Natural killer cell (primary cell): ENCODE measurements at regions of chr1 and their contacts with region 1.

Region 1: GRCh38 chr1:161165742-161166668 is at the start of gene PPOX:
- DNase-seq: peak; percentile 89 to 97
- ATAC-seq: peak; percentile 88 to 97 (median 91)
- H3K4me3 ChIP-seq: peak within 1 kb of the TSS; percentile 69
- H3K4me3 Mint-ChIP-seq: peak within 1 kb of the TSS; percentile 93
- H3K27ac ChIP-seq: peak within 1 kb of the TSS; percentile 89
- H3K27ac Mint-ChIP-seq: peak within 1 kb of the TSS; percentile 97 to 98
- H3K4me1 ChIP-seq: peaks cover 26% of the 10 kb centered on the region
- H3K4me1 Mint-ChIP-seq: peaks cover 25 to 51% of the 10 kb centered on the region in 2 donors
- H3K27me3 ChIP-seq: no peaks in the 10 kb centered on the region
- H3K27me3 Mint-ChIP-seq: no peaks in the 10 kb centered on the region
- CTCF ChIP-seq: peak; percentile 44
- total RNA-seq, gene PPOX: 45.5 to 66.3 (median 57.4) TPM

Region 2: GRCh38 chr1:161132410-161133219 is 33.4 kb before region 1 on chr1 and contains the start of gene DEDD:
- intact Hi-C with region 1: loop called (anchors 1 kb)
- DNase-seq: peak; percentile 81 to 95
- ATAC-seq: peak; percentile 92 to 97 (median 95)
- H3K4me3 ChIP-seq: peak within 1 kb of the TSS; percentile 77
- H3K4me3 Mint-ChIP-seq: no peak within 1 kb of the TSS
- H3K27ac ChIP-seq: peak within 1 kb of the TSS; percentile 81
- H3K27ac Mint-ChIP-seq: no peak within 1 kb of the TSS
- H3K4me1 ChIP-seq: peaks cover 21% of the 10 kb centered on the region
- H3K4me1 Mint-ChIP-seq: peaks cover 21 to 43% of the 10 kb centered on the region in 2 donors
- H3K27me3 ChIP-seq: no peaks in the 10 kb centered on the region
- H3K27me3 Mint-ChIP-seq: no peaks in the 10 kb centered on the region
- CTCF ChIP-seq: no peak
- total RNA-seq, gene DEDD: 40.6 to 44.0 (median 43.0) TPM

Region 3: DNA sequence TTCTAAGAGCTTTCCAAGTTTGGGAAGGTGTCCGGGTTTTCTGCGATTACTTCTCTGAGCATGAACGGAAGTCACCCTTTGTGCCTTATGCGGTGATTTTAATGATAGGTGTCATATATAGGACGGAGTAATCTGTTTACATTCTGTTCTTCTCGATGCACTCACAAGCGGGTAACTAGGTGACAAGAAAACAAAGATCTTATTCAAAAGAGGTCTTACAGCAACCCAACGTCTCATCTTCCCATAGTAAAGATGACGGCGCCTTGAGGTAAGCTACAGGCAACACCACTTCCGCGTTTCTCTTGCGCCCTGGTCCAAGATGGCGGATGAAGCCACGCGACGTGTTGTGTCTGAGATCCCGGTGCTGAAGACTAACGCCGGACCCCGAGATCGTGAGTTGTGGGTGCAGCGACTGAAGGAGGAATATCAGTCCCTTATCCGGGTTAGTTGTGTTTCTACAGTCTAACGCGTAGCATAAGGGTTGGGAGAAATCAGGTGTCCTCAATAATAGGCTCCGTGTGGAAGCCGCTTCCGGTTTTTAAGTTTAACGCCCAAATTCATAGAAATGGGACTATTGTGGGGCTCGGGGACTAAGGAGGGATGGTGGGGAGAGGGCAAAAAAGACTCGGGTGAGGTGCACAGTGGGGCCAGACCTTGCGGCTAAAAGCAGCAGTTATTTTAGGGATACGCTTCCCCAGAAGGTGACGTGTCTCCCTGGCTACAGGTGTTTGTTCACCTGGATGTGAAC is 12.2 kb before region 1 on chr1 and contains the start of gene UFC1:
- intact Hi-C with region 1: loop called (anchors 2 kb)
- DNase-seq: peak; percentile 76 to 95
- ATAC-seq: peak; percentile 91 to 96 (median 94)
- H3K4me3 ChIP-seq: peak within 1 kb of the TSS; percentile 71
- H3K4me3 Mint-ChIP-seq: peak within 1 kb of the TSS; percentile 99
- H3K27ac ChIP-seq: peak within 1 kb of the TSS; percentile 87
- H3K27ac Mint-ChIP-seq: peak within 1 kb of the TSS; percentile 99 to 100
- H3K4me1 ChIP-seq: peaks cover 17% of the 10 kb centered on the region
- H3K4me1 Mint-ChIP-seq: peaks cover 22 to 35% of the 10 kb centered on the region in 2 donors
- H3K27me3 ChIP-seq: no peaks in the 10 kb centered on the region
- H3K27me3 Mint-ChIP-seq: no peaks in the 10 kb centered on the region
- CTCF ChIP-seq: no peak
- total RNA-seq, gene UFC1: 109 to 155 (median 117) TPM

Region 4: GRCh38 chr1:161177112-161177935 is 11.3 kb after region 1 on chr1 and contains the start of gene B4GALT3:
- intact Hi-C with region 1: loop called (anchors 1 kb)
- DNase-seq: peak; percentile 91 to 97
- ATAC-seq: peak; percentile 89 to 94 (median 94)
- H3K4me3 ChIP-seq: peak within 1 kb of the TSS; percentile 96
- H3K4me3 Mint-ChIP-seq: peak within 1 kb of the TSS; percentile 99
- H3K27ac ChIP-seq: peak within 1 kb of the TSS; percentile 89
- H3K27ac Mint-ChIP-seq: peak within 1 kb of the TSS; percentile 96 to 99
- H3K4me1 ChIP-seq: peaks cover 36% of the 10 kb centered on the region
- H3K4me1 Mint-ChIP-seq: peaks cover 74 to 81% of the 10 kb centered on the region in 2 donors
- H3K27me3 ChIP-seq: no peaks in the 10 kb centered on the region
- H3K27me3 Mint-ChIP-seq: no peaks in the 10 kb centered on the region
- CTCF ChIP-seq: no peak
- total RNA-seq, gene B4GALT3: 58.4 to 62.2 (median 59.4) TPM

Region 5: GRCh38 chr1:161185282-161185682 is 19.3 kb after region 1 on chr1:
- intact Hi-C with region 1: loop called (anchors 2 kb)
- DNase-seq: peak; percentile 60 to 93
- ATAC-seq: peak; percentile 69 to 86 (median 86)
- H3K4me3 ChIP-seq: no peak overlapping the region
- H3K4me3 Mint-ChIP-seq: peak overlapping the region; percentile 75
- H3K27ac ChIP-seq: peak overlapping the region; percentile 83
- H3K27ac Mint-ChIP-seq: peak overlapping the region; percentile 95 to 97
- H3K4me1 ChIP-seq: peaks cover 72% of the 10 kb centered on the region
- H3K4me1 Mint-ChIP-seq: peaks cover 79 to 80% of the 10 kb centered on the region in 2 donors
- H3K27me3 ChIP-seq: no peaks in the 10 kb centered on the region
- H3K27me3 Mint-ChIP-seq: no peaks in the 10 kb centered on the region
- CTCF ChIP-seq: no peak

Region 6: DNA sequence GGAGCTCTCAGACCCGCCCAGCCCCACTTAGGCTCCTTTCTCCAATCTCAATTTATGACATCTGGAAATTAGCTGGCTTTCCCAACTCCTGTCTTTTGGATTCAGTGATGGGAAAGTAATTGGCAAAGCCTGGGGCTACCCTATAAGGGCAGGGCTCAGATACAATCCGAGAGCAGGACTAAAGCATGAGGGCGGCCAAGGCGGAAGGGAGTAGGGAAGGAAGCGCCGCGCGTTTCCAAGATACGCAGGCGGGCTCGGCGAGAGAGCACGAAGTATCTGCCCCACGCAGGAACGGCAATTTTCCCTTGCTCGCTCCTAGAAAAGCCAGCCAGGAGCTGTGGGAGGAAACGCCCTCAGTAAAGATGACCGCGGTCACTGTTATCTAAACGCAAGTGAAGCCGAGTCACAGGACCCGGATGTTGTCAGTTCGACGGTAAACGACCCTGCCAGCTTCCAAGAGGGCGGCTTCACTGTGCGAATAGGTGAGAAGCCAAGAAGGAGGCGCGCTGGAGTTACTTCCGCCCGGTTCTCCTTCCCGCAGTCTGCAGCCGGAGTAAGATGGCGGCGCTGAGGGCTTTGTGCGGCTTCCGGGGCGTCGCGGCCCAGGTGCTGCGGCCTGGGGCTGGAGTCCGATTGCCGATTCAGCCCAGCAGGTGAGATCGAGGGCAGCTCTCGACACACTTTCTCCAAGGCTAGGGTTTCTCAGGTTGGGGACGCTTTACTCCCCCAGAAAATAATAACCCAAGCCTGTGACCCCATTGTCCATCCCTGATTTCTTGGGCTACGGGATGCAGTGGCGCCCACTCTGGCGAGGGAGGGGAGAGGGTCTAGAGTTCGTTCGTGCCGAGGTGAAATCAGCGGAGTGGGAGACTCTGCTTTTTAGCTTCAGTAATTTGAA is 36.1 kb after region 1 on chr1 and contains the start of gene NDUFS2:
- intact Hi-C with region 1: loop called (anchors 5 kb)
- DNase-seq: peak; percentile 89 to 99
- ATAC-seq: peak; percentile 97 to 99 (median 99)
- H3K4me3 ChIP-seq: peak within 1 kb of the TSS; percentile 76
- H3K4me3 Mint-ChIP-seq: peak within 1 kb of the TSS; percentile 94
- H3K27ac ChIP-seq: peak within 1 kb of the TSS; percentile 90
- H3K27ac Mint-ChIP-seq: peak within 1 kb of the TSS; percentile 95 to 96
- H3K4me1 ChIP-seq: peaks cover 37% of the 10 kb centered on the region
- H3K4me1 Mint-ChIP-seq: peaks cover 29 to 57% of the 10 kb centered on the region in 2 donors
- H3K27me3 ChIP-seq: no peaks in the 10 kb centered on the region
- H3K27me3 Mint-ChIP-seq: no peaks in the 10 kb centered on the region
- CTCF ChIP-seq: no peak
- total RNA-seq, gene NDUFS2: 74.7 to 88.8 (median 84.7) TPM

Region 7: DNA sequence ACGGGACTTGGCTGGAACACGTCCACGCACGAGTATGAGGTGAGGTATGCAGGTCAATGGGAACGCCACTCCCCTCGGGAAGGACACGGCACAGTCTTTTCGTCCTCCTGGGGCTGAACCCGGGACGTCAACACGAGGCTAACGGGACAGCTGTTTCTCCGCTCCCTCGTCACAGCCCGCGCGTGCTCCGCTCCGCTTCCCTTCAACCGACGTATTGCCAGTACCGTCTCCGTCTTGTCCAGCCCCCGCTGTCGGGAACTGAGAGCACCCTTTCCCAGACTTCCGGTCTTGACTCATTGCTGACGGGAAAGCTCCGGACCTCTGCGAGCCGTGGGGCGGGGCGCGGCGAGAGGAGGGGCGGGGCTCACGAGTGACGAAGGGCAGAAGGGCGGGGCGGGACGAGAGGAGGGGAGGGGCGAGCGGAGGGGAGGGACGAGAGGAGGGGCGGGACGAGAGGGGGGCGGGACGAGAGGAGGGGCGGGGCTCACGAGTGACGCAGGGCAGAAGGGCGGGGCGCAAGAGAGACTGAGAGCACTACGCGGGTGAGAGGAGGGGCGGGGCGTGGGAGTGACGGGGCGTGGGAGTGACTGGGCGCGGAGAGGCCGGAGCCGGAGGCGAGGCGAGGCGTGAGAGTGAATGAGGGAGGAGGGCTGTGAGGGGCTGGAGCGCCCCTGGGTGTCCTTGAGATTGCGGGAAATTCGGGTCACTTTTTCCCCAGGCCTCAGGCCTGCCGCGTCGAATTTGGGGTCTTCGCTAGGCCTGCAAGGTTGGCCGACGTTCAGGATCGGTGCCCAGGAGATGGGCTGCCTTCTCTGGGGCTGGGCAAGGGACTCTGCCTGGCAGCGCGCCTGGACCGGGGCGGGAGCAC is 223.9 kb after region 1 on chr1:
- intact Hi-C with region 1: no loop called
- DNase-seq: peak; percentile 94 to 96
- ATAC-seq: peak; percentile 92 to 99 (median 94)
- H3K4me3 ChIP-seq: peak overlapping the region; percentile 62
- H3K4me3 Mint-ChIP-seq: peak overlapping the region; percentile 94
- H3K27ac ChIP-seq: peak overlapping the region; percentile 69
- H3K27ac Mint-ChIP-seq: peak overlapping the region; percentile 88 to 93
- H3K4me1 ChIP-seq: peaks cover 14% of the 10 kb centered on the region
- H3K4me1 Mint-ChIP-seq: peaks cover 9 to 17% of the 10 kb centered on the region in 2 donors
- H3K27me3 ChIP-seq: no peaks in the 10 kb centered on the region
- H3K27me3 Mint-ChIP-seq: no peaks in the 10 kb centered on the region
- CTCF ChIP-seq: no peak